Kidney (tissue), 22 donors: ENCODE measurements at regions of chr14 and their contacts with region 1.

Region 1: GRCh38 chr14:93939304-93940229 is 12.4 kb downstream of the FAM181A start:
- DNase-seq: peak; percentile 69 to 92 (median 88)
- H3K4me3 ChIP-seq: peak overlapping the region in 1 of 3 donors; percentile 17
- H3K27ac ChIP-seq: no peak overlapping the region
- H3K4me1 ChIP-seq: peaks cover 0 to 5% (median 0%) of the 10 kb centered on the region in 3 donors
- H3K27me3 ChIP-seq: peaks cover 13% of the 10 kb centered on the region
- CTCF ChIP-seq: peak; percentile 80

Region 2: GRCh38 chr14:93787465-93788292 is 151.9 kb before region 1 on chr14:
- intact Hi-C with region 1: no loop called
- DNase-seq: peak in 4 of 5 donors; percentile 26 to 61 (median 33)
- H3K4me3 ChIP-seq: no peak overlapping the region
- H3K27ac ChIP-seq: no peak overlapping the region
- H3K4me1 ChIP-seq: no peaks in the 10 kb centered on the region
- H3K27me3 ChIP-seq: no peaks in the 10 kb centered on the region
- CTCF ChIP-seq: no peak

Region 3: DNA sequence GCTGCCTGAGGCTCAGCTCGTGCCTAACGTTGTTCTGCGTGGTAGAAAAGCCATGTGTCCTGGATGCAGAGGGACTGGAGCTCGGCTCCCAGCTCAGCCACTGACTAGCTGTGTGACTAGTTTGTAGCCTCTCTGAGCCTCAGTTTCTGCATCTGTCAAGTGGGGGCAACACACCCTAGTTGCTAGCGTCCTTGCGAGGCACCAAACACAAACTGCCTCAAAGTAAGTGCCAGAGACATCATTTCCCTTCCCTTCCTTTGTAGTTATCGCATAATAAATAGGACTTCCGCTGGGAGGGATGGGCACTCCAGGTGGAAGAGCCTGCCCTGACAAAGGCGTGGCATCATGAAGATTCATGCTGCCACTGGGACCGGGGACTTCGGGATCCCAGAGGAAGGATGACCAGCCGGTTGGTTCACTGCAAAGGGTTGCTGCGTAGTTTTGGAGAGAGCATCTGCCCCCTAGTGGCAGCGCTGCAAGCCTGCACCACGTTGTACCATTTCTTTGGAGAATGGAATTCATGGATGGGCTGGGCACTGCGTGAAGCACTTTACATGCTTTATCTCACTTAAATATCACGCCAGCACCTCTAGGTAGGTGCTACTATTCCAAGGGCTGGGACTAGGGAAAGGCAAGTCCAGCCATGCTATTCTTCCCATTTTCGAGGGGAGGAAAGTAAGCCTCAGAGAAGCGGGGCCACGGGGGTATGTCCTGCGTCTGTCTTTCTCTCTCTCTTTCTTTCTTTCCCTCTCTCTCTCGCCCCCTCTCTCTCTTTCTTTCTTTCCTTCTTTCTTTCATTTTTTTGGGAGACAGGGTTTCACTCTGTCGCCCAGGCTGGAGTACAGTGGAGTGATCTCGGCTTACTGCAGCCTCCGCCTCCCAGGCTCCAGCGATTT is 62.2 kb after region 1 on chr14:
- intact Hi-C with region 1: loop called (anchors 5 kb)
- DNase-seq: peak in 4 of 5 donors; percentile 67 to 82 (median 74)
- H3K4me3 ChIP-seq: no peak overlapping the region
- H3K27ac ChIP-seq: no peak overlapping the region
- H3K4me1 ChIP-seq: peaks cover 0 to 4% (median 3%) of the 10 kb centered on the region in 3 donors
- H3K27me3 ChIP-seq: peaks cover 3% of the 10 kb centered on the region
- CTCF ChIP-seq: peak; percentile 95